Naive thymus-derived CD4-positive, alpha-beta T cell (primary cell): ENCODE measurements at regions of chr6 and their contacts with region 1.

Region 1: DNA sequence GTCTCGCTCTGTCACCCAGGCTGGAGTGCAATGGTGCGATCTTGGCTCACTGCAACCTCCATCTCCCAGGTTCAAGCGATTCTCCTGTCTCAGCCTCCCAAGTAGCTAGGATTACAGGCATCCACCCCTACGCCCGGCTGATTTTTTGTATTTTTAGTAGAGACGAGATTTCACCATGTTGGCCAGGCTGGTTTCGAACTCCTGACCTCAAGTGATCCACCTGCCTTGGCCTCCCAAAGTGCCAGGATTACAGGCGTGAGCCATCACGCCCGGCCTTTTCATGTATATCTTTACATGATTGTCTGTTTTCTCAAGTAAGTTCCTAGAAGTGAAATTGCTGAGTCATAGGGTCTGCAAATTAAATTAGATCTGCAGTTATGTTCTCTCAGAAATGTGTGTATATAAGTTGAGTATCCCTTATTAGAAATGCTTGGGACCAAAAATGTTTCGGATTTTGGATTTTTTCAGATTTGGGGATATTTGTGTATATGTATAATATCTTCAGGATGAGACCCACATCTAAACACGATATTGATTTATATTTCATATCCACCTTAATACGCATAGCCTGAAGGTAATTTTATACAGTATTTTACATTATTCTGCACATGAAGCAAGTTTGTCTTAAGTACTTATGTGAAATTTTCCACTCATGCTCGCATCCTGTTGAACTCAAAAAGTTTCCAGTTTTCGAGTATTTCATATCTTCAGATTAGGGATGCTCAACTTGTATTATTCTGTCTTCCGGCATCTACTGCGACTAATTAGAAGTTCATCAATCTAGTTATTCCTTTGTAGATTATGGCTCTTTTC is 40.4 kb downstream of the TAB2 start:
- DNase-seq: no peak
- ATAC-seq: no peak
- H3K4me3 ChIP-seq: no peak overlapping the region
- H3K4me3 Mint-ChIP-seq: peak overlapping the region in 7 of 10 donors; percentile 1 to 52 (median 34)
- H3K27ac ChIP-seq: no peak overlapping the region
- H3K27ac Mint-ChIP-seq: peak overlapping the region in 7 of 9 donors; percentile 1 to 79 (median 64)
- H3K4me1 ChIP-seq: peaks cover 12 to 18% of the 10 kb centered on the region in 2 donors
- H3K4me1 Mint-ChIP-seq: peaks cover 39 to 86% (median 75%) of the 10 kb centered on the region in 7 donors
- H3K27me3 ChIP-seq: no peaks in the 10 kb centered on the region
- H3K27me3 Mint-ChIP-seq: no peaks in the 10 kb centered on the region

Region 2: GRCh38 chr6:149373511-149373910 is 15.6 kb after region 1 on chr6:
- CTCF ChIA-PET with region 1: no interaction called
- POLR2A ChIA-PET with region 1: interaction called, 3 read pairs
- intact Hi-C with region 1: loop called in 1 of 2 experiments (anchors 2 kb)
- DNase-seq: no peak
- ATAC-seq: no peak
- H3K4me3 ChIP-seq: no peak overlapping the region
- H3K4me3 Mint-ChIP-seq: peak overlapping the region in 5 of 10 donors; percentile 1 to 26 (median 8)
- H3K27ac ChIP-seq: no peak overlapping the region
- H3K27ac Mint-ChIP-seq: peak overlapping the region in 7 of 9 donors; percentile 0 to 81 (median 44)
- H3K4me1 ChIP-seq: peaks cover 7 to 30% of the 10 kb centered on the region in 2 donors
- H3K4me1 Mint-ChIP-seq: peaks cover 37 to 67% (median 65%) of the 10 kb centered on the region in 7 donors
- H3K27me3 ChIP-seq: no peaks in the 10 kb centered on the region
- H3K27me3 Mint-ChIP-seq: no peaks in the 10 kb centered on the region